ENCODE measurements at regions of chr19 and their contacts with region 1.

Region 1: DNA sequence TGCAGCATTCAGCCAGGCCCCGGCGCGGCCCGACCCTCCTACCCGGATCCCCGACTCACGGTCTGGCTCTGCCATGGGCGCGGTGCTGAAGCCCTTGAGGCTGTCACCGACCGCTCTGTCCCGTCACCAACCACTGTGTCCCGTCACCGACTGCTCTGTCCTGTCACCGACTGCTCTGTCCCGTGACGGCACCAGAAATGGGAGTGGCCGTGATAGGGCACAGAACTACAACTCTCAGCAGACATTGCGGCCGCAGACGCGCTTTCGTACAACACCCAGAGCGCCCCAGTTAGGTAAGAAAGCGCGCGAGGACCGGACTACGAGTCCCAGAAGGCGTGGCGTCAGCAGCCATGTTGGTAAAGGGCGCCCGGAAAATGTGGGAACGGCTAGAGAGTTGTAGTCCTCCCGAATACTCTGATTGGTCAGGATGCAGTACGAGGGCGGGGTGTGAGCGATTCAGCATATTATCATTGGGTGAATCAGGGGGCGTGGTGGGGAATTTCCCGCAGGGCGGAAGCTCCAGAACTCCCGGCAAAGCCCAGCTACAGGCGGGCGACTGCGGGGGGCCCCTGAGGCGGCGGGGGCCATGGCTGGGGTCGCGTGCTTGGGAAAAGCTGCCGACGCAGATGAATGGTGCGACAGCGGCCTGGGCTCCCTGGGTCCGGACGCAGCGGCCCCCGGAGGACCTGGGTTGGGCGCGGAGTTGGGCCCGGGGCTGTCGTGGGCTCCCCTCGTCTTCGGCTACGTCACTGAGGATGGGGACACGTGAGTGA is at the starts of genes NFKBIB and SIRT2:
- DNase-seq: peak; percentile 100
- ATAC-seq: peak; percentile 92 to 97
- H3K4me3 ChIP-seq: peak within 1 kb of the TSS; percentile 56
- H3K27ac ChIP-seq: peak within 1 kb of the TSS; percentile 76 to 85
- H3K4me1 ChIP-seq: peaks cover 17% of the 10 kb centered on the region
- CTCF ChIP-seq: no peak
- EP300 ChIP-seq: no peak
- POLR2A ChIP-seq: peak; percentile 63
- RAD21 ChIP-seq: no peak
- polyA plus RNA-seq, gene NFKBIB: 25.6 and 35.0 TPM in 2 replicates
- polyA plus RNA-seq, gene SIRT2: 28.6 and 31.5 TPM in 2 replicates

Region 2: DNA sequence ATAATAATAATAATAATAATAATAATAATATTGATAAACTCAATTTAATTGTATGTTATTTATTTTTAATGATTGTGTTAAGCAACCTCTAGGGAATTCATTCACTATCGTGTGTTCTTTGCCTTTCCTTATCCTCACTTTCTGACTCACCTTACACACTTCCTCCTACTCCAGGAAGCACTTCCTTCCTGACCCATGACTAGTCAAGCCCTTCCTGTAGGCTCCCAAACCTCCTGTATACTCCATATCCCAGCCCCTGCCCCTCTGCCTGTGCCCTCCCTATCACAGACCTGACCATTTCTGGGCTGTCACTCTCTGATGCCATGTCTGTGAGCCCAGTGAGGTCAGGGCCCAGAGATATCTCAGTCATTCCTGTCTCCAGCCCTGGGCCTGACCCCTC is 94.5 kb before region 1 on chr19:
- CTCF ChIA-PET with region 1: no interaction called
- POLR2A ChIA-PET with region 1: no interaction called
- DNase-seq: peak in 1 of 2 experiments; percentile 25
- ATAC-seq: peak in 1 of 2 experiments; percentile 27; a peak in 1 of 6 replicates
- H3K4me3 ChIP-seq: no peak overlapping the region
- H3K27ac ChIP-seq: peak overlapping the region; percentile 35 to 62; a peak in 5 of 6 replicates
- H3K4me1 ChIP-seq: peaks cover 23% of the 10 kb centered on the region
- CTCF ChIP-seq: no peak
- EP300 ChIP-seq: no peak
- POLR2A ChIP-seq: no peak
- RAD21 ChIP-seq: no peak

Region 3: DNA sequence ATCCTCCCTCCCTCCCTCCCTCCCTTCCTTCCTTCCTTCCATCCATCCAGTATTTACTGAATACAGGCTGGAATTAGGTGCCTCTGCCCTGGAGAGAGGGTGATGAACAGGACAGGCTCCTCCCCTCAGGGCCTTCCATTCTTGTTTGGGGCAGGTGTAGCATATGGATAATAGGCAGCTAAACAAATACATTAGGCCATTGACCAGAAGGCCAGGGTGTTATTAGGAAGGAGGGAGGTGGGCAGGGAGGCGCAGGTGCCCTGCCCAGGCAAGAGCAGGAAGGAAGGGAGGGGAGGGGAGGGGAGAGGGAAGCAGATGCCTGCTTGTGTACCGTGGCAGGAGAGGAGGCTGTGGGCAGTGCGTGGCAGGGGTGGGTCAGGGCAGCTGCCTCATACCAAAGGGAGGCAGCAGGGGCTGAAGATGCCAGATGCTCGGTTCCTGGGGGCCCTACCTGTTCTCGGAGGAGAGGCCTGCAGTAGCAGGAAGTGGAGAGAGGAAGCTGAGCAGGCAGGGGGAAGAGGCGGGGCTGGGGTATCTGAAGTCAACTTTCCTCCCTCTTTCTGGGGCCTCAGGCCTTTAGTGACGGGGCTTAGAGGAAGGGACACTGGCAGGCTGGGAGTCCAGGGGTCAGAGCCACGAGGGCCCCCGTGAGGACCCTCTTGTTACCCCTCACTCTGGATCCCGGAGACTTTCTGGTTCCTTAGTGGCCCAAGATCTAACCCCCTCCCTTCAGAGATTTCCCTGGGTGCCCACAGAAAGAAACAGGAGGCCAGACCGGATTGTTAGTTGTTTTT is 21.7 kb before region 1 on chr19 and contains the start of gene RINL:
- CTCF ChIA-PET with region 1: interaction called, 652 read pairs
- POLR2A ChIA-PET with region 1: no interaction called
- DNase-seq: no peak
- ATAC-seq: peak; percentile 17 to 20; a peak in 4 of 6 replicates
- H3K4me3 ChIP-seq: no peak within 1 kb of the TSS
- H3K27ac ChIP-seq: peak within 1 kb of the TSS; percentile 28 to 63
- H3K4me1 ChIP-seq: peaks cover 4% of the 10 kb centered on the region; the same call in 2 of the 3 replicates
- CTCF ChIP-seq: no peak
- EP300 ChIP-seq: no peak
- POLR2A ChIP-seq: no peak
- RAD21 ChIP-seq: no peak
- polyA plus RNA-seq, gene RINL: 6.3 and 6.6 TPM in 2 replicates

Region 4: DNA sequence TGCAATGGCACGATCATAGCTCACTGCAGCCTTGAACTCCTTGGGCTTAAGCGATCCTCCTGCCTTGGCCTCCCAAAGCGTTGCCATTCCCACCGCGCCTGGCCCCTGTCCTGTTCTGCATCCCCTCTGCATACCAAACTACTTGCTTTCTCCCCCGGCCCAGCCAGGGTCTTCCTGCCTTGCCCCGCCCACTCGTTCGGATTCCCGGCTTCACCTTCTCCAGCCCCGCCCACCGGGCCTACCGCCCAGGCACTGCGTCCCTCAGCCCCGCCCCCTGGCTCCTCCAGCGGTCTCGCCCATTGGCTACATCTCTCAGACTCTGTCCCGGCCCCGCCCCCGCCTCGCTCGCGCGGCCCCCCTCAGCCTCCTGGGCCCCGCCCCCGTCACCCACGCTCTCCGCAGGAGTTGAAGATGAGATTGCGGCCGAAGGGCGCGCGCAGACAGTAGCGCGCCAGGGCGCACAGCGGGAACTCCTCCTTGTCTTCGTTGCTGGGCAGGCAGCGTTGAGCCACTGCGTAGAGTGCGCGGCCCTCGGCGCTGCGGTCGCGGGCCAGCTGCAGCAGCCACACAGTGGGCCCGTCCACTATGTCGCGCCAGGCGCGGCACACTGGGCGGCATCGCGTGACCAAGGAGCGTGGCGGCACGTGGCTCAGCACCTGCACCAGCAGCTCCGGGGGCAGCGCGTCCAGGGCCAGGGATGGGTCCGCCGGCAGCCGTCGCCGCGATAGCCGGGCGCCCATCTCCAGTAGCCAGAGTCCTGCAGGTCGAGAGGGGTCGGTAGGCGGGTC is 50.1 kb after region 1 on chr19:
- CTCF ChIA-PET with region 1: no interaction called
- POLR2A ChIA-PET with region 1: no interaction called
- DNase-seq: no peak
- ATAC-seq: no peak
- H3K4me3 ChIP-seq: no peak overlapping the region
- H3K27ac ChIP-seq: no peak overlapping the region
- H3K4me1 ChIP-seq: peaks cover 23% of the 10 kb centered on the region
- CTCF ChIP-seq: no peak
- EP300 ChIP-seq: no peak
- POLR2A ChIP-seq: peak; percentile 27
- RAD21 ChIP-seq: no peak

Measured in A549 (cell line).